KBM-7 (cell line): ENCODE measurements at regions of chr3 and their contacts with region 1.

Region 1: DNA sequence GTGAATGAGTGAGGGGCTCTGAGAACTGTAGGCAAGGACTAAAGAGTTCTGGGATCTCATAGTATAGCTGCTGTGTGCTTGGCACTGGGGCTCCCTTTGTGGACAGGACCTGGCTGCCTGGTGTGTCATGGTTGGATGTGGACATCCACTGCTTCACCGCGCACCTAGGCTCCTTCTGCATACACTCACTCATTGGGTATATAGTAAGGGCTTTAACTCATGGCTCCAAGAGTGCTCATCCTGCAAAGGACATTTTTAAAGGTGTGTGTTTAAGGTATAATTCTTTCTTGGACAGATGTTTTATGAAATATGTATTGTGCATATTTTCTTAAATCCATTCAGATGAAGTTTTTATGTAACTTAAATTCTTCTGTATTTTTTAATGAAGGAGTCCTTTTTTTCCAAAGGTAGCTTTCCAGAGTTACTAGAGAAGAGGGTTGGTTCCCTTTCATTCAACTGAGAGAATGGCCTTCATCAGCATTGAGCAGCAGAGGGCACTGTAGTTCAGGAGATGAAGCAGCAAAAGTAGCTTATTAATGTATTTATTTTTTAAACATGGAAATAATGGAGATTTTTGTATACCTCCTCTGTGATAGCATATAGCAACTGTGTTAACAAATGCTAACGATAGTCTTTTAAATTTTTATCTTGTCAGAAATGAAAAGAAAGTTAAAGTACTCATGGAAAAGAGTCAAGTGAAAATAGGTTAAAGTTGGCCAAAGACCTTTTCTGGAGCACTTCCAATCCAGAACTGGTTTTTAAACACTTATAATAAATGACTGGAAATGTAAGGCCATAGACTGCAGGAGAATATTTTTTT is 25.2 kb downstream of the OXNAD1 start:
- DNase-seq: peak; percentile 67

Region 2: GRCh38 chr3:16028604-16029003 is 261.6 kb before region 1 on chr3:
- in situ Hi-C with region 1: no loop called
- DNase-seq: no peak

Region 3: GRCh38 chr3:16130066-16130465 is 160.2 kb before region 1 on chr3:
- in situ Hi-C with region 1: no loop called
- DNase-seq: no peak

Region 4: DNA sequence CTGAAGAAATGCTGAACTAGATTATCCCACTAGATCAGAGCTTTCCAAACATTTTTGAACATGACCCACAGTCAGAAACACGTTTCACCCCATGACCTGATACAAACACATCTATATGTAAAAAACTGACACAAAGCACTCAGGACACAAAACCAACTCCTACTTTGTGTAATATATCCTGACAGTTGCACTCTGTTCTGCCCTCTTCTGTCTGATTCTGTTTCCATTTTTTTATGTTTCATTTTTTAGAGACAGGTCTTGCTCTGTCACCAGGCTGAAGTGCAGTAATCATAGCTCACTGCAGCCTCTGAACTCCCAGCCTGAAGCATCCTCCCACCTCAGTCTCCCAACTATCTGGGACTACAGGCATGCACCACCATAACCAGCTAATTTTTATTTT is 239.0 kb after region 1 on chr3:
- in situ Hi-C with region 1: loop called (anchors 25 kb)
- DNase-seq: no peak